ENCODE measurements at regions of chr12 and their contacts with region 1.

Region 1: DNA sequence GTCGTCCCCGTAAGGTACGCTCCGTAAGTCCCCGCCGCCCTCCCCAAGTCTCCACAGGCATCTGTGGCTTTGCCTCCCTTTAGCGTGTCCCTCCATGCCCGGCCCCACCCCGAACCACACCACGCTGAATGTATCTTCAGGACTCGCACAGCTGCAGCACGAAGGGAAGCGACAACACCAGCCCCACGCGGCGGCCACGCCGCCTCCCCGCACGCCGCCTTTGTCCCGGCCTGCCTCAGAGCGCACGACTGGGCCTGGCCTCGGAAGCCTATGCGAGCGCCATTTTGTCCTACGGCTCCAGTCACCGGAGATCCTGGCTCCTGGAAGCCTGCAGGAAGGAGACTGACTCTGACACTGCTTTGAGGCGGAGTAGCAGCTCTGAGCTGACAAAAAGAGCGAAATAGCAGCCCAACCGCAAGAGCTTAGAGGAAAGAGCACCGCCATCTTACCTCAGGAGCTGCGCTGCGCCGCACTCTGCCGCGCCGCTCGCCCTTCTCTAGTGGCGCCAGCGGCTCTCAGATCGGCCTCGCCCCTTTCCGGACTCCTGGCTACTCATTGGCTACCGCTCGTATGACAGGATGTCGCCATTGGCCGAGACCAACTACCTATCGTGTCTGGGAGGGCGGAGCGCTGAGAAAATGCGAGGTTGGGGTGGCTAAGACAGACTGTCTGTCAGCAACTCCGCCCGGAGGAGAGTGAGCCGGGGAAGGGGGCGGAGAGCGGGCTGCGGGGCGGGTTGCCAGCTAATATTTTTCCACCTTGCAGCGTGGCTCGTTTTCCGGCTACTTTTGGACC is at the start of gene KANSL2:
- DNase-seq: peak; percentile 100
- H3K4me3 Mint-ChIP-seq: peak within 1 kb of the TSS; percentile 95
- H3K27ac Mint-ChIP-seq: peak within 1 kb of the TSS; percentile 96
- H3K4me1 Mint-ChIP-seq: peaks cover 25% of the 10 kb centered on the region
- H3K27me3 Mint-ChIP-seq: no peaks in the 10 kb centered on the region
- CTCF ChIP-seq: no peak
- total RNA-seq, gene KANSL2: 35.3 and 44.2 TPM in 2 replicates

Region 2: DNA sequence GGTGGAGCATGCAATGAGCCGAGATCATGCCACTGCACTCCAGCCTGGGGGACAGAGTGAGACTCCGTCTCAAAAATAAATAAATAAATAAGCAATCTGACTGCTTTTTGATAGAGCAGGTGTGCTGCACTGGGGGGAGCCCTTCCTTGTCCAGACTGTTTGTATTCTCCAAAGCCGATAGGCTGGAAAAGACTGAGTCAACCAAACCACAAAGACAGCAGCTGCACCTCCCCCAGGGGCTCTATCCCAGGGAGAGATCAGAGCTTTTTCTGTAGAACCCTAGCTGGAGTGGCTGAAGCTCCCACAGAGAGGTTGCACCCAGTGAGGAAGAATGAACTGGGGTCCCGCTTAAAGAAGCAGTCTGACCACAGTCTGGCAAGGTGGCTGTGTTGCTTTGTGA is 66.3 kb before region 1 on chr12:
- CTCF ChIA-PET with region 1: no interaction called
- POLR2A ChIA-PET with region 1: no interaction called
- intact Hi-C with region 1: no loop called
- DNase-seq: peak; percentile 9
- H3K4me3 Mint-ChIP-seq: no peak overlapping the region
- H3K27ac Mint-ChIP-seq: no peak overlapping the region
- H3K4me1 Mint-ChIP-seq: no peaks in the 10 kb centered on the region
- H3K27me3 Mint-ChIP-seq: peaks cover 63% of the 10 kb centered on the region
- CTCF ChIP-seq: no peak

Region 3: GRCh38 chr12:48671231-48671856 is 10.6 kb before region 1 on chr12:
- CTCF ChIA-PET with region 1: interaction called, 3 read pairs
- POLR2A ChIA-PET with region 1: interaction called, 30 read pairs
- intact Hi-C with region 1: no loop called
- DNase-seq: no peak
- H3K4me3 Mint-ChIP-seq: no peak overlapping the region
- H3K27ac Mint-ChIP-seq: no peak overlapping the region
- H3K4me1 Mint-ChIP-seq: no peaks in the 10 kb centered on the region
- H3K27me3 Mint-ChIP-seq: no peaks in the 10 kb centered on the region
- CTCF ChIP-seq: no peak

Region 4: GRCh38 chr12:48716493-48717251 is 34.7 kb after region 1 on chr12 and contains the start of gene CCNT1:
- CTCF ChIA-PET with region 1: interaction called, 4 read pairs
- POLR2A ChIA-PET with region 1: interaction called, 29 read pairs
- intact Hi-C with region 1: no loop called
- DNase-seq: peak; percentile 100
- H3K4me3 Mint-ChIP-seq: peak within 1 kb of the TSS; percentile 92
- H3K27ac Mint-ChIP-seq: peak within 1 kb of the TSS; percentile 99
- H3K4me1 Mint-ChIP-seq: peaks cover 14% of the 10 kb centered on the region
- H3K27me3 Mint-ChIP-seq: no peaks in the 10 kb centered on the region
- CTCF ChIP-seq: no peak
- total RNA-seq, gene CCNT1: 54.3 and 55.1 TPM in 2 replicates

Measured in MCF 10A (cell line).